ENCODE measurements at regions of chr4 and their contacts with region 1.

Region 1: DNA sequence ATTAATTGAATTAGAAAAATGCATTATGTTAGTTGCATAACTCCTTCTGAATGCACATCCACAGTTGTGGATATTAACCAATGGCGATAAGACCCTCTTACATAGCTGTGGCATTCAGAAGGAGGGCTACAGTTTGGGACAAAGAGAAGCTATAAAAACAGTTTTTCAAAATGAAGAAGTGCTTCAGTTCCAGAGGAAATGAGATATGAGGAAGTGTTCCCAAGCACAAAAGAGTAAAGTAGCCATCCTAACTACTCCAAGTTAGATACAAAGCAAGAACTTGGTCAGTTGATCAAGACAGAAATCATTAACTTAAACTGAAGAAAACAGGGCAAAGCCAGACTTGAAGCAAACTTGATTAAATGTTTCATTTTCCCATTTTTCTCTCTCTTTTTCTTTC is 17.2 kb upstream of the ADGRL3 start:
- DNase-seq: no peak

Region 2: DNA sequence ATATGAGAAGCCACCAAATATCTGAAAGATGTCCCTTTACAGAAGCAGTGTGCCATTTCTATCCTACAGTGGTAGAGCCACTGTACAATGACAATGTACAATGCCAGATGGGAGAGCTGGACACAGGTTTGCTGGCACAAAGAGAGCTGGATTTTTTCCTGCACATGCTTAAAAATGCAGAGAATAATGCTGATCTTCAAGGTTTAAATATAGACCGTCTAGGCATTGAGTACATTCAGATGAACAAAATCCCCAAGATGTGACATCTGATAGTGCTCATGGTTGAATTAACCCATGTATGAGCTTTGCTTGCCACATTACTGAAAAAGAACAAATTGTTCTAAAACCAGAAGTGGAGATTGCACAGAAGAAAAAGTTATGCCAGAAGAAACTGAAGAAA is 28.9 kb after region 1 on chr4:
- intact Hi-C with region 1: loop called in 1 of 2 experiments (anchors 1 kb)
- DNase-seq: no peak

Measured in posterior vena cava (tissue), 2 donors.